ENCODE measurements at regions of chr7 and their contacts with region 1.

Region 1: GRCh38 chr7:24965831-24966709 is 13.9 kb downstream of the OSBPL3 start:
- DNase-seq: peak; percentile 61
- H3K4me3 Mint-ChIP-seq: peak overlapping the region; percentile 36
- H3K27ac Mint-ChIP-seq: peak overlapping the region; percentile 80
- H3K4me1 Mint-ChIP-seq: peaks cover 82% of the 10 kb centered on the region
- H3K27me3 Mint-ChIP-seq: no peaks in the 10 kb centered on the region

Region 2: DNA sequence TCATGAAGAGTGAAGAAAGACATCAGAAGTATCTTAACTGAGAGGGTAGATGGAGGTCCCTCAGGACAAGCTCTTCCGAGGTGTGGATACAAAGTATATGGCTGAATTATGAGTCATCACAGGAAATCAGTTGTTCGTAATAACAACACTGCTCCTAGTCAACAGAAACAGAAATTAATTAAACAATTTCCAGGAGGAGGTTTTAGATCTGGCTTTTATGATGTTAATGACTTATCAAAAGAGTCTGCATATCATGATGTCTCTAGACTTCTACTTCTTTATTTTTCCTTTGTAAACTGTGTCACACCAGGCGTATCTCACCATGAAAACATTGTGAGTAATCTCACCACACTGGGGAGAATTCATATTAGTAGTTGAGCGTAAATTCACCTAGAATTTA is 17.3 kb before region 1 on chr7:
- CTCF ChIA-PET with region 1: interaction called, 3 read pairs
- POLR2A ChIA-PET with region 1: no interaction called
- intact Hi-C with region 1: loop called (anchors 1 kb)
- DNase-seq: no peak
- H3K4me3 Mint-ChIP-seq: no peak overlapping the region
- H3K27ac Mint-ChIP-seq: peak overlapping the region; percentile 3
- H3K4me1 Mint-ChIP-seq: peaks cover 59% of the 10 kb centered on the region
- H3K27me3 Mint-ChIP-seq: no peaks in the 10 kb centered on the region